ENCODE measurements at regions of chr3 and their contacts with region 1.

Region 1: GRCh38 chr3:71809321-71810026 is 24.5 kb upstream of the PROK2 start:
- DNase-seq: no peak

Region 2: GRCh38 chr3:71504250-71505036 is 305.0 kb before region 1 on chr3:
- intact Hi-C with region 1: no loop called
- DNase-seq: no peak

Region 3: DNA sequence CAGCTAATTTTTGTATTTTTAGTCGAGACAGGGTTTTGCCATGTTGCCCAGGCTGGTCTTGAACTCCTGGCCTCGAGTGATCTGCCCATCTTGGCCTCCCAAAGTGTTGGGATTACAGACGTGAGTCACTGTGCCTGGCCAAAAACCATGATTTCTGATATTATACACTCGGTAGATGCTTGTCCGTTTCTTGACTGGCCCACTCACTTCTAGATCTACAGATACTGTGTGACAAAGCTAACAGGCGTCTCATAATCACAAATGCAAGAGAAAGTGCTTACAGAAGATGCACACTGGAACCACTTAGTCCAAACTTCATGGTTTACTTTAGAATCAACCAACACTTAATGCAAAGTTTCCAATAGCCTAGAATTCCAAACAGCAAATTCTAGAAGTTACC is 32.9 kb before region 1 on chr3:
- intact Hi-C with region 1: loop called (anchors 2 kb)
- DNase-seq: no peak

Measured in head of caudate nucleus (tissue), 42 donors.